Breast epithelium (tissue), 4 donors: ENCODE measurements at regions of chr14 and their contacts with region 1.

Region 1: GRCh38 chr14:45134051-45134958 is at the start of gene FKBP3:
- DNase-seq: peak; percentile 94 to 97
- H3K4me3 ChIP-seq: peak within 1 kb of the TSS; percentile 59 to 78 (median 65)
- H3K27ac ChIP-seq: peak within 1 kb of the TSS; percentile 85 to 88
- H3K4me1 ChIP-seq: peaks cover 0 to 17% of the 10 kb centered on the region in 2 donors
- H3K27me3 ChIP-seq: no peaks in the 10 kb centered on the region
- CTCF ChIP-seq: no peak
- POLR2A ChIP-seq: peak; percentile 87
- total RNA-seq, gene FKBP3: 25.8 to 41.3 (median 41.0) TPM

Region 2: DNA sequence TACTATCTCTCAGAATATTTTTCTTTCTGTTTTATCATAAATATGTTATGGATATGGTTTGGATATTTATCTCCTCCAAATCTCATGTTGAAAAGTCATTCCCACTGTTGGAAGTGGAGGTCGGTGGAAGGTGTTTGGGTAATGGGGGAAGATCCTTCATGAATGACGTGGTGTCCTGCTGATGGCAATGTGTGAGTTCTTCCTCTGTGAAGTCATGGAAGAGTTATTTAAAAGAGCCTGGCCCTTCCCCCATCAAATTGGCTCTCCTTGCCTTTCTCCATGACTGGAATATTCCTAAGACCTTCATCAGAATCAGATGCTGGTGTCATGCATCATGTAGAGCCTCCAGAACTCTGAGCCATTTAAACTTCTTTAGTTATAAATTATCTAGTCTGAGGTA is 1918.8 kb before region 1 on chr14:
- intact Hi-C with region 1: no loop called
- DNase-seq: no peak
- H3K4me3 ChIP-seq: no peak overlapping the region
- H3K27ac ChIP-seq: no peak overlapping the region
- H3K4me1 ChIP-seq: no peaks in the 10 kb centered on the region
- H3K27me3 ChIP-seq: no peaks in the 10 kb centered on the region
- CTCF ChIP-seq: no peak
- POLR2A ChIP-seq: no peak

Region 3: DNA sequence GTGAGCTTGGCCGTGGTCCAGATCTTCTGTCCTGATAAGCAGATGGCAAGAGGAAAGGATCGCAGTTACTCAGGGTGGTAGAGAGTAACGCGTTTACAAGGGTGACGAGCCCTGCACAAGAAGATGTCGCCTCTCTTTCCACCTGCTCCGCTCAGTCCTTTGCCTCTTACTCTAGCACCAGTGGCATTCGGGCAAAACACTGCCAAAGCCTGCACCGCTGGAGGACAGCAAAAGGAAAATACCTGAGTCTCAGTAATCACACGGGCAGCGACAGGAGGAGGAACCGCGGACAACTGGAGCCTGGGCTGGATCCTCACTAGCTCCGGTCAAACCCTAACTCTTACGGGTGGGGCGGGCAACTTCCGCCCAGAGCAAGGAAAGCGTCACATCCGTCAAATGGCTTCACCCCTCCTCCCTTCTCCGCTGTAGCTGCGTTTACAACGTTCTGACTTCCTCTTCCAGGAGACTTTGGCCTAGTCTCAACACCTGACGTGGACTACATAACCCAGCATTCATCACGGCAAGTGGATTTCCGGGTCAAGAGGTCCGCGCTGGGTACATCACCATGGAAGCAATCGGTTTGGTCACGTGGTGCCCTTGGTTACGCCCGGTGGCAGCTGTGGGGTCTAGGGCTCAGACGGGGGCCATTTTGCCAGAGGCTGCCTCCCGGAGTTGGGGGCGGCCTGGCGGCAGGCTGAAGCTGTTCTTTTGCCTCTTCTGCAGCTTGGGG is 172.5 kb before region 1 on chr14 and contains the starts of genes KLHL28 and TOGARAM1:
- intact Hi-C with region 1: loop called (anchors 5 kb)
- DNase-seq: peak; percentile 93 to 99
- H3K4me3 ChIP-seq: peak within 1 kb of the TSS; percentile 76 to 84 (median 84)
- H3K27ac ChIP-seq: peak within 1 kb of the TSS; percentile 86 to 93
- H3K4me1 ChIP-seq: peaks cover 3 to 28% of the 10 kb centered on the region in 2 donors
- H3K27me3 ChIP-seq: no peaks in the 10 kb centered on the region
- CTCF ChIP-seq: no peak
- POLR2A ChIP-seq: peak; percentile 28
- total RNA-seq, gene KLHL28: 9.9 to 17.7 (median 10.5) TPM
- total RNA-seq, gene TOGARAM1: 21.3 to 38.1 (median 22.9) TPM